ENCODE measurements at regions of chr13 and their contacts with region 1.

Region 1: DNA sequence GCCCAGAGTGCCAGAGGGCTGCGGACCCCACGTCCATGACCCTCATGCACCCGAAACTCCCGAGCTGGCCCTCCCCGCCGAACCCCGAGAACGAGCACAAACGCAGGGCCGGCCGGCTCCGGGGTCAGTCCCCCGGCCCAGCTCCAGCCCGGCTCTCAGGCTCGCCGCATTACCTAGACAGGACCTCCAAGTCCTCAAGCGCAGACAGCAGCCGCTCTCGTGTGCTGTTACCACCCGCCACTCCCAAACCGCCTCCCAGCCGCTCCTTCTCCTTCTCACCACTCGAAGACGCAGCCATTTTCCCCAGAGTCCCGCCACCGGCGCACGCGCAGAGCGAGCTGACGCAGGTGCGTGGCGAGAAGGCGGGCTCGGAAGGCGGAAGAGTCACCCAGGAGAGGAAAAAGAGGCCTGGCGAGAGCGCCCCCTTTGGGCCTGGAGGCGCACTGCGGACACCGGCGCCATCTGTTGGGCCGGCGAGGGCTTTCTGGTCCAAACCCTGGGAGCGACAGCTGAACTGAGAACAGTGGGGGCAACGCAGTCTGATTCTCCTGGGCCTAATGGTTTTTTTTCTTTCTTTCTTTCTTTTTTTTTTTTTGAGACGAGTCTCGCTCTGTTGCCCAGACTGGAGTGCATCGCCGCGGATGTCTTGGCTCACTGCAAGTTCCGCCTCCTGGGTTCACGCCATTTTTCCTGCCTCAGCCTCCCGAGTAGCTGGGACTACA is at the start of gene MED4:
- DNase-seq: peak; percentile 96 to 98
- ATAC-seq: peak; percentile 97 to 99 (median 98)
- H3K4me3 ChIP-seq: peak within 1 kb of the TSS; percentile 61 to 100 (median 97)
- H3K27ac ChIP-seq: peak within 1 kb of the TSS; percentile 11 to 96 (median 91)
- H3K4me1 ChIP-seq: peaks cover 0 to 45% (median 35%) of the 10 kb centered on the region in 9 donors
- H3K27me3 ChIP-seq: no peaks in the 10 kb centered on the region
- CTCF ChIP-seq: peak; percentile 98 to 100 (median 99)
- total RNA-seq, gene MED4: 42.7 to 57.7 (median 48.7) TPM

Region 2: GRCh38 chr13:48037346-48038173 is 57.4 kb before region 1 on chr13 and contains the start of gene NUDT15:
- intact Hi-C with region 1: loop called in 1 of 10 experiments (anchors 5 kb)
- DNase-seq: peak; percentile 92 to 94
- ATAC-seq: peak; percentile 97 to 99 (median 99)
- H3K4me3 ChIP-seq: peak within 1 kb of the TSS; percentile 53 to 87 (median 66)
- H3K27ac ChIP-seq: peak within 1 kb of the TSS; percentile 91 to 98 (median 96)
- H3K4me1 ChIP-seq: peaks cover 4 to 26% (median 14%) of the 10 kb centered on the region in 9 donors
- H3K27me3 ChIP-seq: no peaks in the 10 kb centered on the region
- CTCF ChIP-seq: peak; percentile 86 to 99 (median 97)
- total RNA-seq, gene NUDT15: 9.6 to 13.7 (median 11.3) TPM

Region 3: GRCh38 chr13:48050550-48050949 is 44.4 kb before region 1 on chr13:
- intact Hi-C with region 1: no loop called
- DNase-seq: no peak
- ATAC-seq: peak in 2 of 8 donors; percentile 44 to 58
- H3K4me3 ChIP-seq: no peak overlapping the region
- H3K27ac ChIP-seq: peak overlapping the region in 3 of 10 donors; percentile 14 to 22 (median 19)
- H3K4me1 ChIP-seq: peaks cover 0 to 4% (median 0%) of the 10 kb centered on the region in 9 donors
- H3K27me3 ChIP-seq: no peaks in the 10 kb centered on the region
- CTCF ChIP-seq: no peak

Region 4: GRCh38 chr13:48233046-48233907 is 138.3 kb after region 1 on chr13 and contains the start of gene ITM2B:
- intact Hi-C with region 1: loop called in 4 of 10 experiments (anchors 5 to 10 kb)
- DNase-seq: peak; percentile 80 to 86
- ATAC-seq: peak; percentile 85 to 96 (median 93)
- H3K4me3 ChIP-seq: peak within 1 kb of the TSS; percentile 86 to 100 (median 97)
- H3K27ac ChIP-seq: peak within 1 kb of the TSS; percentile 98 to 100 (median 100)
- H3K4me1 ChIP-seq: peaks cover 0 to 55% (median 44%) of the 10 kb centered on the region in 9 donors
- H3K27me3 ChIP-seq: no peaks in the 10 kb centered on the region
- CTCF ChIP-seq: peak in 8 of 9 donors; percentile 25 to 67 (median 53)
- total RNA-seq, gene ITM2B: 434 to 636 (median 511) TPM

Region 5: GRCh38 chr13:48319531-48320398 is 224.8 kb after region 1 on chr13:
- intact Hi-C with region 1: loop called in 1 of 10 experiments (anchors 10 kb)
- DNase-seq: no peak
- ATAC-seq: no peak
- H3K4me3 ChIP-seq: peak overlapping the region in 5 of 10 donors; percentile 40 to 48 (median 43)
- H3K27ac ChIP-seq: no peak overlapping the region
- H3K4me1 ChIP-seq: peaks cover 0 to 21% (median 11%) of the 10 kb centered on the region in 9 donors
- H3K27me3 ChIP-seq: no peaks in the 10 kb centered on the region
- CTCF ChIP-seq: no peak

Region 6: GRCh38 chr13:48346583-48346982 is 251.6 kb after region 1 on chr13:
- intact Hi-C with region 1: no loop called
- DNase-seq: no peak
- ATAC-seq: no peak
- H3K4me3 ChIP-seq: no peak overlapping the region
- H3K27ac ChIP-seq: no peak overlapping the region
- H3K4me1 ChIP-seq: peaks cover 0 to 3% (median 0%) of the 10 kb centered on the region in 9 donors
- H3K27me3 ChIP-seq: no peaks in the 10 kb centered on the region
- CTCF ChIP-seq: no peak

Measured in heart right ventricle (tissue), 16 donors.